PC-9 (cell line): ENCODE measurements at regions of chr12 and their contacts with region 1.

Region 1: GRCh38 chr12:44260581-44260980 is 424.7 kb downstream of the TMEM117 start:
- DNase-seq: no peak
- H3K4me3 ChIP-seq: no peak overlapping the region
- H3K27ac ChIP-seq: no peak overlapping the region
- H3K4me1 ChIP-seq: no peaks in the 10 kb centered on the region
- H3K27me3 ChIP-seq: no peaks in the 10 kb centered on the region
- CTCF ChIP-seq: no peak

Region 2: DNA sequence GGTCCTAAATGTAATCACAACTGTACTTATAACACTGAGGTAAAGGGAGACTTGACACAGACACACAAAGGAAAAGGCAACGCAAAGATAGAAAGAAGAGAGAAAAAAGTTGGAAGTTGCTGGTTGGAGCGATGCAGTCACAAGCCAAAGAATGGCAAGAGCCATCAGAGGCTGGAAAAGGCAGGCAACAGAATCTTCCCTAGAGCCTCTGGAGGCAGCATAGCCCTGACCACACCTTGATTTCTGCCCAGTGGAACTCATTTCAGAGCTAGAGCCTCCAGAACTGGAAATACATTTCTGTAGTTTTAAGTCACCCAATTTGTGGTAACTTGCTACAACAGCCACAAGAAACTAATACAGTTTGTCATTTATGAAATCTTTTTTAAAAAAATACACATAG is 591.2 kb before region 1 on chr12:
- CTCF ChIA-PET with region 1: no interaction called
- POLR2A ChIA-PET with region 1: no interaction called
- intact Hi-C with region 1: no loop called
- DNase-seq: no peak
- H3K4me3 ChIP-seq: no peak overlapping the region
- H3K27ac ChIP-seq: no peak overlapping the region
- H3K4me1 ChIP-seq: no peaks in the 10 kb centered on the region
- H3K27me3 ChIP-seq: no peaks in the 10 kb centered on the region
- CTCF ChIP-seq: no peak

Region 3: DNA sequence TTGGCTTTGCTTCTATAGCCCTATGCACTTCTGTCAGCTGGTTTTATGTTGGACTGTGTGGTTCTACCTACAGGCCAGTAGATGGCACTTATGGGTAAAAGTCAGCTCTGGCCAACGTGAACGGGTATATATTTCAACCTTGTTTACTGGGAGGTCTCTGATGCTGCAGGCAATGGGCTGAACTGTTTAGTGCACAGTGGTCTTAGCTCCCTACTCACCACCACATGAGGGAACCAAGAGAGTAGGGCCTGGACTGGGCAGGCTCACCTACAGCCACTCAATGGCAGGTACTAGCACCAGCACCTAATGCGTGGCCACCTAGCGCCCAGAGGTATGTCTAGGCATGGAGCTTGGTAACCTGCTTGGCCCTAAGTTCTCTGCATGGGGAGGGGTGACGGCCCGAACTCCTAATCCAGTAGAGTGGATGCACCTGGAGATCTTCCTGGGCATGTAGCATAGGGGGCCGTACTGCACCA is 57.1 kb after region 1 on chr12:
- CTCF ChIA-PET with region 1: interaction called, 14 read pairs
- POLR2A ChIA-PET with region 1: no interaction called
- intact Hi-C with region 1: no loop called
- DNase-seq: no peak
- H3K4me3 ChIP-seq: no peak overlapping the region
- H3K27ac ChIP-seq: no peak overlapping the region
- H3K4me1 ChIP-seq: peaks cover 11% of the 10 kb centered on the region
- H3K27me3 ChIP-seq: no peaks in the 10 kb centered on the region
- CTCF ChIP-seq: peak; percentile 29; the same call in 1 of the 2 replicates